GM12878 (cell line): ENCODE measurements at regions of chr18 and their contacts with region 1.

Region 1: GRCh38 chr18:35060122-35060815 is 19.1 kb downstream of the MAPRE2 start:
- DNase-seq: no peak
- ATAC-seq: no peak
- H3K4me3 ChIP-seq: no peak overlapping the region
- H3K27ac ChIP-seq: no peak overlapping the region
- H3K4me1 ChIP-seq: no peaks in the 10 kb centered on the region
- H3K27me3 ChIP-seq: no peaks in the 10 kb centered on the region
- CTCF ChIP-seq: no peak
- EP300 ChIP-seq: no peak
- POLR2A ChIP-seq: no peak
- RAD21 ChIP-seq: no peak

Region 2: DNA sequence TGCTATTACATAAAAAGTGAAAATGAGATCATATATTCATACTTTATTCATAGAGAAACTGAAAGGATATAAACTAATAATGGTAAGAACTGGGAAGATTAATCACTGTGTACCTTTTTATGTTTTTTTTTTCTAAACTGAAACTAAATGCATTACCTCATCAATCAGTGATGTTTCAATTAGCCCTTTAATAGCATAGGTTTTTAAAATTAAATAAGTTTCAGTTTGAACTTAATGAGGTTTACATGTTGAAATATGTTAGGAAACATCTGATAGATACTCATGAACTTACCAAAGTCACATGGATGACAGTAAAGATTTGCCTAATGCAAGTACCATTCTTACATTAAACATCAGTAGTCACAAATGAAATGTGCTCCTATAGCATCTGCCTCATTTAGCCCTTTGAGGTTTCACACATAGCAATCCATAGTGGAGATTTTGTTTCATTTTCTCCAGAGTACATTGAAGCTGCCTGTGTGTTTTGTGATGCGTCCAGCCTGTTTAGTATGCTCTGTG is 10.2 kb before region 1 on chr18:
- CTCF ChIA-PET with region 1: interaction called, 5 read pairs
- POLR2A ChIA-PET with region 1: interaction called, 8 read pairs
- RAD21 ChIA-PET with region 1: interaction called, 3 read pairs
- SMC1A ChIA-PET with region 1: interaction called, 15 read pairs
- in situ Hi-C with region 1: no loop called
- intact Hi-C with region 1: no loop called
- DNase-seq: no peak
- ATAC-seq: peak; percentile 66
- H3K4me3 ChIP-seq: peak overlapping the region; percentile 43
- H3K27ac ChIP-seq: peak overlapping the region; percentile 94
- H3K4me1 ChIP-seq: peaks cover 20% of the 10 kb centered on the region
- H3K27me3 ChIP-seq: no peaks in the 10 kb centered on the region
- CTCF ChIP-seq: no peak
- EP300 ChIP-seq: no peak
- POLR2A ChIP-seq: no peak
- RAD21 ChIP-seq: no peak